B cell (primary cell): ENCODE measurements at regions of chr7 and their contacts with region 1.

Region 1: GRCh38 chr7:142853739-142854371 is 1.0 kb upstream of the EPHB6 start:
- DNase-seq: peak; percentile 91
- ATAC-seq: peak; percentile 88
- H3K4me3 ChIP-seq: peak overlapping the region; percentile 46 to 99 (median 92)
- H3K4me3 Mint-ChIP-seq: peak overlapping the region; percentile 99
- H3K27ac ChIP-seq: peak overlapping the region; percentile 82 to 86
- H3K27ac Mint-ChIP-seq: peak overlapping the region; percentile 99
- H3K4me1 ChIP-seq: peaks cover 12 to 24% of the 10 kb centered on the region in 2 donors
- H3K4me1 Mint-ChIP-seq: peaks cover 29% of the 10 kb centered on the region
- H3K27me3 ChIP-seq: no peaks in the 10 kb centered on the region
- H3K27me3 Mint-ChIP-seq: no peaks in the 10 kb centered on the region
- CTCF ChIP-seq: peak; percentile 89

Region 2: DNA sequence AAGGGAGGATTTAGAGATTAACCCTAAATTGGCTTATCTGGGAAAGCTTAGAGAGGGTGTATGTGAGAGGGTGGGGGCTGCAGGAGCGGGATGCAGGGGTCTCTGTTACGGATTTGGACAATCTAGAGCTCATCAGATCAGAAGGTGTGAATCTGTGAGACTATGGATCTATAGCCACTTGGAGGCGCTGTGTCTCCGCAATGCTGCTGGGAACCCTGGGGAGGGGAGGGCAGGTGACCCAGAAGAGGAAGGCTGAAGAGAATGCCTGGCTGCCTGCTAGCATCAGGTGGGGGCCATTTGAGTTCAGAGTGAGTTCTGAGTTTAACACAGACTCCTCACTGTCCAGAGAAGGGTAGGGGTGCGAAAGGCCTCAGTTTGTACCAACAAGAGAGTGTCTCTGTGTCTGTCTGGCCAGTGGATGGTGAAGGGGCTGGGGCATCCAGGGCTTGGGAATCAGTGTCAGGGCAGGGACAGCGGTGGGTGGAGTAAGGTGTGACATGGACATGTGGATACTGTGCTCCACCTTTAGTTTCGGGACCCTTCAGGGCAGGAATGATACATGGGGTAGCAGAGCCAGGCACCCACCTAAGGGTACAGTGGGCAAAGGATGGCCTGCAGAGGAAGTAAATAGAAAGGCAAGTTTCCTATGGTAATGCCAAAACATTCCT is 408.7 kb before region 1 on chr7:
- CTCF ChIA-PET with region 1: no interaction called
- POLR2A ChIA-PET with region 1: no interaction called
- intact Hi-C with region 1: no loop called
- DNase-seq: no peak
- ATAC-seq: no peak
- H3K4me3 ChIP-seq: no peak overlapping the region
- H3K4me3 Mint-ChIP-seq: no peak overlapping the region
- H3K27ac ChIP-seq: no peak overlapping the region
- H3K27ac Mint-ChIP-seq: no peak overlapping the region
- H3K4me1 ChIP-seq: peaks cover 3 to 4% of the 10 kb centered on the region in 2 donors
- H3K4me1 Mint-ChIP-seq: peaks cover 4% of the 10 kb centered on the region
- H3K27me3 ChIP-seq: no peaks in the 10 kb centered on the region
- H3K27me3 Mint-ChIP-seq: peaks cover 33% of the 10 kb centered on the region
- CTCF ChIP-seq: no peak

Region 3: DNA sequence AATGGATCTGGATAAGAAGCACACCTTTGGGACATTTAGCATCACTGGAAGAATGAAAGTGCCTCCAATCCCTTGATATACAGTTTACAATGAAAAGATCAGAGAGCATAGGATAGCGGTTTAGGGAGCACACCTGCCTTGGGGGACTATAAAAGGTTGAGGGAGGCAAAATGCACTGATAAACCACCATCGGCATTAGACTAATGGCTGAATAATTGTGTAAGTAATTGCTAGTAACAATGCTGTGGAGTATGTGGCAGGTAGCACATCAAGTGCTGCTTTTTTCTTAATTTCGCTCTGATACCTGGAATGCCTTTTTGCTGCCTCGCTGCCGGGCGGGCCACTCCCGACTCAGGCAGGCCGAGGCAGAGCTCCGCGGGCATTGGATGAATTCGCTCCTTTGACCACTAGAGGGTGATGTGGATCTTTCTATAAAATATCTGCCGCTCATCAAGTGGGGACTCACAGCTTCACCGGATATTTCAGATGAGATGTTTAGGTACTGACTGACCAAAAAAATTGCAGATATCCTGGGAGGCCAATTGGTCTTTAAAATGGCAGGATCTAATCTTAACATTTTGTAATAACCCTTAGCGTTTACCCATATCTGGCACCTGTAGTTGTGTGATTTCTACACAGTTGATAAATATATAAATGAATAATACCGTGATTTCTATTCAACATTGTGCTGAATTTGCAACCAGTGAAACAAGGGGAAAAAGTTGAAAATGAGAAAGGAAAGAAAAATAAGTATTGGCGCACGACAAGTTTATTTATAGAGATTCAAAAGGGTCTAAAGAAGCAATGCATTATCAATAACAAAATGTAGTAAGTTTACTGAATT is 221.3 kb before region 1 on chr7:
- CTCF ChIA-PET with region 1: interaction called, 12 read pairs
- POLR2A ChIA-PET with region 1: no interaction called
- intact Hi-C with region 1: loop called (anchors 2 kb)
- DNase-seq: peak; percentile 85
- ATAC-seq: peak; percentile 97
- H3K4me3 ChIP-seq: no peak overlapping the region
- H3K4me3 Mint-ChIP-seq: no peak overlapping the region
- H3K27ac ChIP-seq: no peak overlapping the region
- H3K27ac Mint-ChIP-seq: no peak overlapping the region
- H3K4me1 ChIP-seq: no peaks in the 10 kb centered on the region
- H3K4me1 Mint-ChIP-seq: peaks cover 3% of the 10 kb centered on the region
- H3K27me3 ChIP-seq: peaks cover 0 to 5% (median 2%) of the 10 kb centered on the region in 4 experiments
- H3K27me3 Mint-ChIP-seq: peaks cover 30% of the 10 kb centered on the region
- CTCF ChIP-seq: peak; percentile 85

Region 4: GRCh38 chr7:142796608-142797385 is 57.1 kb before region 1 on chr7:
- CTCF ChIA-PET with region 1: interaction called, 8 read pairs
- POLR2A ChIA-PET with region 1: interaction called, 47 read pairs
- intact Hi-C with region 1: no loop called
- DNase-seq: peak; percentile 54
- ATAC-seq: peak; percentile 40
- H3K4me3 ChIP-seq: peak overlapping the region; percentile 45 to 93 (median 90)
- H3K4me3 Mint-ChIP-seq: peak overlapping the region; percentile 100
- H3K27ac ChIP-seq: peak overlapping the region; percentile 94 to 99
- H3K27ac Mint-ChIP-seq: peak overlapping the region; percentile 100
- H3K4me1 ChIP-seq: peaks cover 62 to 81% of the 10 kb centered on the region in 2 donors
- H3K4me1 Mint-ChIP-seq: peaks cover 82% of the 10 kb centered on the region
- H3K27me3 ChIP-seq: no peaks in the 10 kb centered on the region
- H3K27me3 Mint-ChIP-seq: no peaks in the 10 kb centered on the region
- CTCF ChIP-seq: no peak

Region 5: GRCh38 chr7:142880876-142881505 is 27.1 kb after region 1 on chr7:
- CTCF ChIA-PET with region 1: interaction called, 8 read pairs
- POLR2A ChIA-PET with region 1: interaction called, 5 read pairs
- intact Hi-C with region 1: loop called (anchors 1 kb)
- DNase-seq: peak; percentile 70
- ATAC-seq: peak; percentile 81
- H3K4me3 ChIP-seq: no peak overlapping the region
- H3K4me3 Mint-ChIP-seq: no peak overlapping the region
- H3K27ac ChIP-seq: no peak overlapping the region
- H3K27ac Mint-ChIP-seq: no peak overlapping the region
- H3K4me1 ChIP-seq: no peaks in the 10 kb centered on the region
- H3K4me1 Mint-ChIP-seq: no peaks in the 10 kb centered on the region
- H3K27me3 ChIP-seq: peaks cover 0 to 8% (median 1%) of the 10 kb centered on the region in 4 experiments
- H3K27me3 Mint-ChIP-seq: peaks cover 13% of the 10 kb centered on the region
- CTCF ChIP-seq: peak; percentile 92

Region 6: DNA sequence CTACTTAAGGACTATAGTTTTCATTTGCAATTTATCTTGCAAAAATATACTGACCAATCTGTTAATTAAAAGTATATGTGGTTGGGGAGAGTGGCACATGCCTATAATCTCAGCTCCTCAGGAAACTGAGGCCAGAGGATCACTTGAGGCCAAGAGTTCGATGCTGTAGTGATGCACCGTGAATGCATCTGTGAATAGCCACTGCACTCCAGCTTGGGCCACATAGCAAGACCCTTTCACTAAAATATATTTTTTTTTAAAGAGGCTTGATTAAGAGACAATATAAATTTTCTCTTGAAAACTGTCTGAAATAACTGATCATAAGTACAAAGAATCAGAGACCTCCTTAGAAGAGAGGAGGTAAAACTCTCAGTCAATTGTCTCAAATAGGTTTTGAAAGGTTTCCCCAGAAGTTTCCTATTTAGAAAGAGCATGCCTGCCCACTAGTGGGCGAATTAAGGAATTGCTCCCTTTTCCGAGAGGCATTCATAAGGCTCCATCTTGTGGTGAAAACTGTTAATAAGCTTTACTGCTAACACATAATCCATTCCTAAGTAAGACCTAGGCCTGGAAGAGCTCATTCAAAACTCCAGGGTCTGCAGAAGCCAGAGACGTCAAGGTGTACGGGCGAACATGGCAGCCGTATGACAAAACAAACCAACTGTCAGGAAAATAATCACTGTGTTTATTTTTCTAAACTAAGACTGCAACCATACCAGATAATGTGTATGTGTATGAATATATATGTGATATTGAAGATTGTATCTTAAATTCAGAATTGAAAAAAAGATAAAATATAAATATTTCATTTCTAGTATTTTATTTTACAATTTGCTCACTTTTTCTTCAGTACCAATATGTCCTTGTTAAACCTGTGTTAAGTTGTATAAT is 361.2 kb after region 1 on chr7:
- CTCF ChIA-PET with region 1: interaction called, 20 read pairs
- POLR2A ChIA-PET with region 1: no interaction called
- intact Hi-C with region 1: loop called (anchors 1 kb)
- DNase-seq: peak; percentile 90
- ATAC-seq: peak; percentile 97
- H3K4me3 ChIP-seq: no peak overlapping the region
- H3K4me3 Mint-ChIP-seq: no peak overlapping the region
- H3K27ac ChIP-seq: no peak overlapping the region
- H3K27ac Mint-ChIP-seq: no peak overlapping the region
- H3K4me1 ChIP-seq: peaks cover 8 to 12% of the 10 kb centered on the region in 2 donors
- H3K4me1 Mint-ChIP-seq: peaks cover 15% of the 10 kb centered on the region
- H3K27me3 ChIP-seq: no peaks in the 10 kb centered on the region
- H3K27me3 Mint-ChIP-seq: peaks cover 3% of the 10 kb centered on the region
- CTCF ChIP-seq: peak; percentile 100

Region 7: GRCh38 chr7:143380255-143380645 is 526.4 kb after region 1 on chr7:
- CTCF ChIA-PET with region 1: no interaction called
- POLR2A ChIA-PET with region 1: no interaction called
- intact Hi-C with region 1: loop called (anchors 1 kb)
- DNase-seq: peak; percentile 92
- ATAC-seq: peak; percentile 55
- H3K4me3 ChIP-seq: peak overlapping the region; percentile 1 to 99 (median 90)
- H3K4me3 Mint-ChIP-seq: peak overlapping the region; percentile 92
- H3K27ac ChIP-seq: peak overlapping the region; percentile 87 to 89
- H3K27ac Mint-ChIP-seq: peak overlapping the region; percentile 93
- H3K4me1 ChIP-seq: peaks cover 43 to 53% of the 10 kb centered on the region in 2 donors
- H3K4me1 Mint-ChIP-seq: peaks cover 28% of the 10 kb centered on the region
- H3K27me3 ChIP-seq: no peaks in the 10 kb centered on the region
- H3K27me3 Mint-ChIP-seq: no peaks in the 10 kb centered on the region
- CTCF ChIP-seq: peak; percentile 85